ENCODE measurements at regions of chr17 and their contacts with region 1.

Region 1: DNA sequence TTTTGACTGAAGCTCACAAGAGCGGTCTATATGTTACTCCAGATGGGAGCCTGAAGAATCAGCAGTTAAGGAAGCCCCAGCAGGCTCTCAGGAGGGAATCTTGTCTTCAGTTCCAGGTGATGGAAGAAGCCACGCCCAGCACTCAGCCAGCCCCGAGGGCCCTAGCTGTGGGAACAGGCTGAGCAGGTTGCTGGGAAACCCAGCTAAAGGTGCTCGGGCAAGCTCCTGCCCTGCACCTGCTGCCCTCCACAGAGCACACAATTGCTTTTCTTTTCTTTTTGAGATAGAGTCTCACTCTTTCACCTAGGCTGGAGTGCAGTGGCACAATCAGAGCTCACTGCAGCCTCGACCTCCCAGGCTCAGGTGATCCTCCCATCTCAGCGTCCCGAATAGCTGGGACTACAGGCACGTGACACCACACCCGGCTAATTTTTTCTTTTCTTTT is 32.3 kb downstream of the WIPI1 start:
- DNase-seq: no peak
- H3K4me3 ChIP-seq: no peak overlapping the region
- H3K27ac ChIP-seq: no peak overlapping the region
- H3K4me1 ChIP-seq: no peaks in the 10 kb centered on the region
- H3K27me3 ChIP-seq: no peaks in the 10 kb centered on the region
- CTCF ChIP-seq: no peak
- POLR2A ChIP-seq: no peak

Region 2: DNA sequence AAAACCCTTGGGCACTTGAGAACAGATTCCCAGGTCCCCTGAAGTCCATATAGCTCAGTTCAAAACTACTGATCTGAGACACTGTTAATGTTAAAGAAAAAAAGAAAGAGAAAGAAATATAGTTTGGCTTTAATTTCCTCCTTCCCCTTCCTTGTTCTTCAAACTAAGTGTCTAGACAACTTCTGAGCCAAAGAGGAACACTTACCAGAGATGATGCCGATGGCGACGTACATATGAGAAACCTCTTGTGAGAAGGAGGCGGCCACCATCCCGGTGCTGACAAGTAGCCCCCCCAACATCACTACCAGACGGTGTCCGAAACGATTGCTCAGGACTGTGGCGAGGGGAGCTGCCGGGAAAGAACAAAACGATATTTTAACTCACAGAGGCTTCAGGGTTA is 151.2 kb before region 1 on chr17:
- intact Hi-C with region 1: loop called (anchors 10 kb)
- DNase-seq: no peak
- H3K4me3 ChIP-seq: no peak overlapping the region
- H3K27ac ChIP-seq: no peak overlapping the region
- H3K4me1 ChIP-seq: no peaks in the 10 kb centered on the region
- H3K27me3 ChIP-seq: no peaks in the 10 kb centered on the region
- CTCF ChIP-seq: no peak
- POLR2A ChIP-seq: no peak

Region 3: GRCh38 chr17:68584581-68585303 is 159.8 kb after region 1 on chr17:
- intact Hi-C with region 1: no loop called
- DNase-seq: no peak
- H3K4me3 ChIP-seq: no peak overlapping the region
- H3K27ac ChIP-seq: peak overlapping the region; percentile 33 to 47
- H3K4me1 ChIP-seq: no peaks in the 10 kb centered on the region
- H3K27me3 ChIP-seq: no peaks in the 10 kb centered on the region
- CTCF ChIP-seq: no peak
- POLR2A ChIP-seq: no peak